ENCODE measurements at regions of chr4 and their contacts with region 1.

Region 1: DNA sequence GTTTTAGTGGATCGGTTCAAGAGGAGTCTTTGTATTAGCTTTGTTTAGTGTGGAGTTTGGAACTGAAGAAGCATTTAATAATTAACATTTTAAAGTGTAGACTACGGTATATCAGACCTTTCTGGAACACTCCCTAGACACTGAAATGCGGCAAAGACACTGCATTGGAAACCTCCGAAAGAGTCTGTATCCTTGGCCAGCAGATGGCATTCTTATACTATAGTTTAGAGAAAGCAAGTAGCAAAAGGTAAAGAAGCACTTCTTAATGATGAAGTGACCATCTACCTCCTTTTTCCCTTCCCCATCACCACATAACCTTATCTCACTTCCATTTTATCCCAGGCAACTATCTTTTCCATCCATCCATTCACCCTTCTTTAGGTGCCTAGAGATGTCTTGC is 7.6 kb downstream of the FABP2 start:
- DNase-seq: peak; percentile 59
- ATAC-seq: peak; percentile 88
- H3K4me3 ChIP-seq: no peak overlapping the region
- H3K27ac ChIP-seq: no peak overlapping the region
- H3K4me1 ChIP-seq: no peaks in the 10 kb centered on the region
- H3K27me3 ChIP-seq: no peaks in the 10 kb centered on the region
- CTCF ChIP-seq: peak; percentile 63

Region 2: GRCh38 chr4:119233750-119234149 is 80.6 kb before region 1 on chr4:
- CTCF ChIA-PET with region 1: no interaction called
- POLR2A ChIA-PET with region 1: no interaction called
- intact Hi-C with region 1: no loop called
- DNase-seq: no peak
- ATAC-seq: no peak
- H3K4me3 ChIP-seq: no peak overlapping the region
- H3K27ac ChIP-seq: no peak overlapping the region
- H3K4me1 ChIP-seq: no peaks in the 10 kb centered on the region
- H3K27me3 ChIP-seq: no peaks in the 10 kb centered on the region
- CTCF ChIP-seq: no peak

Region 3: GRCh38 chr4:119244832-119245231 is 69.5 kb before region 1 on chr4:
- CTCF ChIA-PET with region 1: no interaction called
- POLR2A ChIA-PET with region 1: no interaction called
- intact Hi-C with region 1: no loop called
- DNase-seq: no peak
- ATAC-seq: no peak
- H3K4me3 ChIP-seq: no peak overlapping the region
- H3K27ac ChIP-seq: no peak overlapping the region
- H3K4me1 ChIP-seq: no peaks in the 10 kb centered on the region
- H3K27me3 ChIP-seq: no peaks in the 10 kb centered on the region
- CTCF ChIP-seq: no peak

Region 4: GRCh38 chr4:119490335-119490734 is 176.0 kb after region 1 on chr4:
- CTCF ChIA-PET with region 1: no interaction called
- POLR2A ChIA-PET with region 1: no interaction called
- intact Hi-C with region 1: loop called (anchors 2 kb)
- DNase-seq: peak; percentile 32
- ATAC-seq: peak; percentile 42; the same call in 1 of the 2 replicates
- H3K4me3 ChIP-seq: no peak overlapping the region
- H3K27ac ChIP-seq: no peak overlapping the region
- H3K4me1 ChIP-seq: no peaks in the 10 kb centered on the region
- H3K27me3 ChIP-seq: no peaks in the 10 kb centered on the region
- CTCF ChIP-seq: peak; percentile 32; the same call in 1 of the 2 replicates

Region 5: DNA sequence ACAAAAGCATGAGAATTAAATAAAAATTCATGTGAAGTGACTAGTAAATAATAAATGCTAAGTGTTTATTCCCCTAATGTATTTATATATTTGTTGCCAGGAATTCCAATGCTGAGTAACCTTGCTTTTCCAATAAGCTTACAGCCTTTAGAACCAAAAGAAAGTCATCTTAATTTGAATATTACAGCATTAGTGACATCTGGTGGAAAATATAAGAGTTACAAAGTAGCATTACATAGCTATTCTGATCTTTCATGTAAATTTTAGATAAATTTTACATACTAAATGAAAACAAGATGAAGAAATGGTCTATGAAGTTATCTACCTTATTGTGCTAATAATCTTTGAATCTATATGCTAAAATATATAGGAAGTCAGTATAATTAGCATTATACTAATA is 741.9 kb after region 1 on chr4:
- CTCF ChIA-PET with region 1: no interaction called
- POLR2A ChIA-PET with region 1: no interaction called
- intact Hi-C with region 1: loop called (anchors 2 kb)
- DNase-seq: peak; percentile 35
- ATAC-seq: peak; percentile 42; the same call in 1 of the 2 replicates
- H3K4me3 ChIP-seq: no peak overlapping the region
- H3K27ac ChIP-seq: no peak overlapping the region
- H3K4me1 ChIP-seq: peaks cover 10% of the 10 kb centered on the region; the same call in 1 of the 2 replicates
- H3K27me3 ChIP-seq: no peaks in the 10 kb centered on the region
- CTCF ChIP-seq: peak; percentile 44